K562 (cell line): ENCODE measurements at regions of chr10 and their contacts with region 1.

Region 1: DNA sequence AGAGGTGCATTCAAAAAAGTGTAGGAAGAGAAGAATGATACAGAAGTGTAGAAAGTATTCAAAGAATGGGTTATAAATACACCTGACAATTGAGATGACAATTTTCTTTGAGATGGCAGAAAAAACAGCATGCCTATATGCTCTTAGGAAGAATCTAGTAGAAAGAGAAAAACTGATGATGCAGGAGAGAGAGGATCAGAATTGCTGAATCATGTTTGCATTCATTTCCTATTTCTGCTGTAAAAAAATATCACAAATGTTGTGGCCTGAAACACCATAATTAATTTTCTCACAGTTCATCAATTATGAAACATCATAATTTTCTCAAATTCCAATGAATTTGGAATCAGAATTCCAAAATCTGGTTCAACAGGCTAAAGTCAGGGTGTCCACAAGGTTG is 9.8 kb upstream of the AKR1C1 start:
- DNase-seq: no peak
- ATAC-seq: no peak
- H3K4me3 ChIP-seq: no peak overlapping the region
- H3K27ac ChIP-seq: no peak overlapping the region
- H3K4me1 ChIP-seq: peaks cover 0 to 2% of the 10 kb centered on the region in 2 experiments; a peak in 2 of 5 replicates
- H3K27me3 ChIP-seq: no peaks in the 10 kb centered on the region
- CTCF ChIP-seq: no peak
- EP300 ChIP-seq: no peak
- POLR2A ChIP-seq: no peak
- RAD21 ChIP-seq: no peak

Region 2: GRCh38 chr10:5013385-5013784 is 60.0 kb after region 1 on chr10:
- CTCF ChIA-PET with region 1: no interaction called
- POLR2A ChIA-PET with region 1: no interaction called
- in situ Hi-C with region 1: loop called (anchors 5 kb)
- intact Hi-C with region 1: no loop called
- DNase-seq: no peak
- ATAC-seq: no peak
- H3K4me3 ChIP-seq: no peak overlapping the region
- H3K27ac ChIP-seq: no peak overlapping the region
- H3K4me1 ChIP-seq: 0 out of 5 replicates have a peak, but pooled peaks cover 0 to 2% of the 10 kb centered on the region in 2 experiments
- H3K27me3 ChIP-seq: no peaks in the 10 kb centered on the region
- CTCF ChIP-seq: no peak
- EP300 ChIP-seq: no peak
- POLR2A ChIP-seq: no peak
- RAD21 ChIP-seq: no peak